Adrenal gland (tissue), 19 donors: ENCODE measurements at regions of chr18 and their contacts with region 1.

Region 1: DNA sequence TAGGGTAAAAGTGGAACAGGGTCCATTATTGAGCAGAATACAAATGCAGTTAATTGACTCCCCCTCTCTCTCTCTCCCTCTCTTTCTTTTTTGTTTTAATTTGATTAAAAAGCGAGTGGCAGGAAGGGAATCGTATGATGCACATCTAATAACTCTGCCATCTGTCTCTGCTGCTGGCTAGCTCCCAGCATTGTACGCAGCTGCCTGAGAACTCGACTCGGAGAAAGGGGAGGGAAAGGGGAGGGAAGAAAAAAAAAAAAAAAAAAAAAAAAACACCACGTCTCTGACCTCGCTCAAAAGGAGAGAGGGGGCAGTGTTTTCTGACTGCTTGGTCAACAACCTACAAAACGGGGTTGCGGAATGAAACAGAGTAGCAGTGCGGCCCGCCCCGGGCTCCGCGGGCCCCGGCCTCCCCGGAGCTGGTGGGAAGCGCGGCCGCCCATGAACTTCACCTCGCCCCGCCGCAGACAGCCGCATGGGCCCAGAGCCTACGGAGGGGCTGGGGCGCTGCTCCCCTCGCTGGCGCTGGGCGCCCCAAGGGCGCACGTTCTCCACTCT is 265.7 kb downstream of the TCF4 start:
- DNase-seq: peak; percentile 89 to 98 (median 94)
- H3K4me3 ChIP-seq: peak overlapping the region in 3 of 4 donors; percentile 35 to 75 (median 75)
- H3K27ac ChIP-seq: peak overlapping the region; percentile 88 to 98 (median 95)
- H3K4me1 ChIP-seq: peaks cover 20 to 39% of the 10 kb centered on the region in 2 donors
- H3K27me3 ChIP-seq: no peaks in the 10 kb centered on the region
- CTCF ChIP-seq: peak in 4 of 6 experiments; percentile 8 to 29 (median 20)
- POLR2A ChIP-seq: peak; percentile 84 to 93

Region 2: DNA sequence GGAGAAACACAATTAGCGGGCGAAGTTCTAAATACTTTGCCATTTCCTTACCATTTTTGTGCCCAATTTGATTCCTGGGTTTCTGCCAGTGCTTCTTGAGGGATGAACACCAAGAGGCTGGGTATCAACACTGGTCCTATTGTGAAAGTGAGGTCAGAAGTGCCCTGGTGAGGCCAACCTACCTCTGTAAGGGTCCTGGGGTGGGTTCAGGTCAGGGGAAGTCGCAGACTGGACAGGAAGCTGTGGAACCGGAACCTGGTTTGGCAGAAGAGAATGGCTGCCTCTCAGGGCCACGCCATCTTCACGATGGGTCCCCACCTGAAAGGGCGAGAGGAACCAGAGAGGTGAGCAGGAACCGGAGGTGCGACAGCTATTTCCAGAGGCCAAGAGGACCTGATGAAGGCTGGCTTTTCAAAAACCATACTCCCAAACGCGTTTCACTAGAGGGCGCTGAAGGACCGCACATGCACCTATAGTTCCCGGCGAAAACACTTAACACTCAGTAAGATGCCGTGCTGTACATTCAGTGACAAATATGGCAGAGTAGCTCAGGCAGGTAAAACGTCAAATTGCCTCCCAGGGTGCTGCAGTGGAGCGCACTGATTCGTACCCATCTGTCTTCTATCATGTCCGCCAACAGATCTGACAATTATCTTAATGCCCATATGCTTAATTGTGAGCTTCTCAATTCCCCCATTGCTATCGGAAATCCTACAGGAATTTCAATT is 87.7 kb before region 1 on chr18:
- intact Hi-C with region 1: loop called in 1 of 2 experiments (anchors 10 kb)
- DNase-seq: peak; percentile 67 to 95 (median 82)
- H3K4me3 ChIP-seq: no peak overlapping the region
- H3K27ac ChIP-seq: peak overlapping the region in 2 of 5 donors; percentile 6 to 20
- H3K4me1 ChIP-seq: peaks cover 6 to 26% of the 10 kb centered on the region in 2 donors
- H3K27me3 ChIP-seq: no peaks in the 10 kb centered on the region
- CTCF ChIP-seq: peak; percentile 56 to 88 (median 84)
- POLR2A ChIP-seq: no peak

Region 3: DNA sequence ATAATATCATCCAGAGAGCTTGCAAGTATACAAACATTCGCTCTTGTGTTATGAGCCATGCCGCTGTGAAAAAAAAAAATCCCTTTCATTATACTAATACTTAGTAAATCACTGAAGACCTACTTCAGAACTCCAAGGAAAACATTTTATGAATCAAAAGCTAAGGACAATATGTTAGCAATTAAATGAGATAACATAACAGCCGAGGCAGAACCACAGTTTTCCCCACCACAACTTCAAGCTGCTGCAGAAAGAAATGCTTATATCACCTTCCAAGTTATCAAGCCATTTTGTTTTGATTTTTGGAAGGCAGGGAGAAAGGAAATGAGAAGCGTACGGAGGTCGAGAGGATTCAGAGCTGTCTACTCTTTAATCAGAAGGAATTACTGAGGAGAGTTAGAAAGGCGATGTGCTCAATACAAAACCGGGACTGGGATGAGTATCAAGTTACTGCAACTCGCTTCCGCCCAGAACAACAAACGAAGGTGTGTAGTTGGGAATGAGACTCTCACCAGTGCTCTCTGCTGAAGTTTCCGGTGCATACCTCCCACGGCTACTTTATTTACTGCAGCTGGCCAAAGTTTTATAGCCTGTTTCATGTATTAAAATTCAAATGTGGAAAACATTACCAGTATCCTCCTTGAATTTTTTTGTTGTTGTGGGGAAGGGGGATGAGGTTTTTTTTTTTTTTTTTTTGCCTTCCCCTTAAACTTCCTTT is 70.8 kb before region 1 on chr18:
- intact Hi-C with region 1: no loop called
- DNase-seq: no peak
- H3K4me3 ChIP-seq: no peak overlapping the region
- H3K27ac ChIP-seq: peak overlapping the region in 2 of 5 donors; percentile 46 to 68
- H3K4me1 ChIP-seq: peaks cover 14 to 27% of the 10 kb centered on the region in 2 donors
- H3K27me3 ChIP-seq: no peaks in the 10 kb centered on the region
- CTCF ChIP-seq: no peak
- POLR2A ChIP-seq: no peak

Region 4: DNA sequence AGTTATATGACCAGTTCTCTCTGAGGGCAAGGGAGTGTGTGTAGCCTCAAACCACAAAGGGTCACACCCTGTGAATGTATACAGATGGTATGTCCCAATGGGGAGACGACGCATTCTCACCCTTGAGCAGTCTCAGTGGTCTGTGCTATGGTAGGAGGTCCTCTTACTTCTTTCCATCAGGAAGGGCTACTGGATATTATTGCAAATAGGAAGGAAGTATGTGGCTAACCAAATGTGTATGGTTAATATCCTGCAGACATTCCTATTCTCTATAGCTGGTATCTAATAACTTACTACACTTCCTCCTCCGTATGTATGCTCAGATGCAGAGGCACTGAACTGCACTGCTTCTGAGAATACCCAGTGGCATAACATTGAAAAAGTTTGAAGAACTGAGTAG is 56.3 kb before region 1 on chr18:
- intact Hi-C with region 1: loop called in 1 of 2 experiments (anchors 10 kb)
- DNase-seq: no peak
- H3K4me3 ChIP-seq: no peak overlapping the region
- H3K27ac ChIP-seq: peak overlapping the region in 2 of 5 donors; percentile 4 to 66
- H3K4me1 ChIP-seq: peaks cover 30 to 79% of the 10 kb centered on the region in 2 donors
- H3K27me3 ChIP-seq: no peaks in the 10 kb centered on the region
- CTCF ChIP-seq: no peak
- POLR2A ChIP-seq: no peak

Region 5: GRCh38 chr18:55375930-55376329 is 53.7 kb after region 1 on chr18:
- intact Hi-C with region 1: no loop called
- DNase-seq: no peak
- H3K4me3 ChIP-seq: no peak overlapping the region
- H3K27ac ChIP-seq: no peak overlapping the region
- H3K4me1 ChIP-seq: no peaks in the 10 kb centered on the region
- H3K27me3 ChIP-seq: no peaks in the 10 kb centered on the region
- CTCF ChIP-seq: no peak
- POLR2A ChIP-seq: no peak

Region 6: DNA sequence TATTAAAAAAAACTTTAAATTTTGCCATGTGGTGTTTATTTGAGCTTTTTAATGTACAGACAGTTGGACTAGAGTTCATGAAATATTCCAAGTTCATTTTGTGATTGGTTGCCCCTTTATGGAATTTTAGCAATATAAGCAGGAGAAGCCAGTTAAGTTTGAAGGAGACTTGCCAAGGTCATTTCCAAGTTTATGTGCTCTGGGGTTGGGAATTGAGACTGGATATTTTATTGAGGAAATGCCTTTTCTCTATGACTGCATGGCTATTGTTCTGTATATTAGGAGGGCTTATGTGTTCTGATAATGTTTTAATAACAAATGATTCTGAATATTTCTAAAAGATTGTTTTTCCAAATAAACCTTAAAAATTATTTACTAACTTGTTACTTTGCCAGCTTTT is 332.7 kb after region 1 on chr18:
- intact Hi-C with region 1: no loop called
- DNase-seq: no peak
- H3K4me3 ChIP-seq: no peak overlapping the region
- H3K27ac ChIP-seq: no peak overlapping the region
- H3K4me1 ChIP-seq: no peaks in the 10 kb centered on the region
- H3K27me3 ChIP-seq: no peaks in the 10 kb centered on the region
- CTCF ChIP-seq: no peak
- POLR2A ChIP-seq: no peak

Region 7: GRCh38 chr18:56638271-56639093 is 1316.2 kb after region 1 on chr18 and contains the start of gene TXNL1:
- intact Hi-C with region 1: no loop called
- DNase-seq: peak; percentile 99 to 100 (median 100)
- H3K4me3 ChIP-seq: peak within 1 kb of the TSS; percentile 12 to 99 (median 96)
- H3K27ac ChIP-seq: peak within 1 kb of the TSS; percentile 96 to 97 (median 97)
- H3K4me1 ChIP-seq: peaks cover 11 to 37% of the 10 kb centered on the region in 2 donors
- H3K27me3 ChIP-seq: no peaks in the 10 kb centered on the region
- CTCF ChIP-seq: no peak
- POLR2A ChIP-seq: peak; percentile 80 to 90
- total RNA-seq, gene TXNL1: 44.6 to 106 (median 72.3) TPM